Lower leg skin (tissue), 4 donors: ENCODE measurements at regions of chr3 and their contacts with region 1.

Region 1: DNA sequence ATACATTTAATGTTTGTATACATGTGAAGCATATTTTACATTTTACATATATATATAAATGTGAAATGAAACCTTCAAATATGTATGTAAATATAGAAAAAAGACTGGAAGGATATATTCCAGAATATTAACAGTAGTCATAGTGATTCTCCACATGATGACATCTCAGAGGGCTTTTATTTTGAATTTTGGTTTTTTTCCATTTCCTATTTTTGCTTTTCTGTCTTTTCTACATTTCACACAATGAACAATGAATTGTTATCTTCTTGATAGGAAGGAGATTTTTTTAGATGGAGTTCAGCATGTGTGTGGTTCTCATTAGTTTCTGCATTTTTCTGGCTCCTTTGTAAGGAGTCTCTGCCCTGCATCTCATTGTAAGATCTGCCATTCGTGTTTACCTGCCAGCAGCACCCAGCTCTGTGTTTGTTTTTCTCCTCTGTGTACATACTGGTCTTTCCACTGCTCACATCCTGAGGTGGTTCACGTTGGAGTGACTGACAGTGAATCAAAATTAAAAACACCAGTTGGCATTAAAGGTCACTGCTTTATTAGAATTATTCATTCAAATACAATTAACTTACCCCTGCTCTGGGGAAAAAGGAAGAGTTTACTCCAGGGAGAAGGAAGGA is 425.4 kb upstream of the MDFIC2 start:
- DNase-seq: no peak
- H3K4me3 ChIP-seq: no peak overlapping the region
- CTCF ChIP-seq: no peak
- POLR2A ChIP-seq: no peak

Region 2: GRCh38 chr3:71103430-71103921 is 365.7 kb after region 1 on chr3:
- intact Hi-C with region 1: no loop called
- DNase-seq: peak; percentile 40 to 88
- H3K4me3 ChIP-seq: no peak overlapping the region
- CTCF ChIP-seq: no peak
- POLR2A ChIP-seq: no peak

Region 3: DNA sequence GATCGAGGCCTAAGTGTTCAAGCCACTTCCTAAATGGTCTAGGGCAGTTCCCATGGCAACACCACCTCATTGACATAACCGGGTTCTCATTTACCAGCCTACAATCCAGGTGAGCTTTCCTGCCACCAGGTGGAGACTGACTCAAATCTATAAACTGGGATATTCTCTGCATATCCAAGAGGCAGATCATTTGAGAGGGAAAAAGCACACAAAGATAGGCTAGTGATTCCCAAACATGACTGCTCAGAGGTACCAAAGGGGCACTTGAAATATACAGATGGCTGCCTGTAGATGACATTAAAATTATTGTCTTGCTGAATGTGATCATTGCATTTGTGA is 1188.4 kb after region 1 on chr3:
- intact Hi-C with region 1: loop called (anchors 5 kb)
- DNase-seq: peak in 1 of 2 donors; percentile 30
- H3K4me3 ChIP-seq: no peak overlapping the region
- CTCF ChIP-seq: no peak
- POLR2A ChIP-seq: no peak